Breast epithelium (tissue), 4 donors: ENCODE measurements at regions of chr2 and their contacts with region 1.

Region 1: DNA sequence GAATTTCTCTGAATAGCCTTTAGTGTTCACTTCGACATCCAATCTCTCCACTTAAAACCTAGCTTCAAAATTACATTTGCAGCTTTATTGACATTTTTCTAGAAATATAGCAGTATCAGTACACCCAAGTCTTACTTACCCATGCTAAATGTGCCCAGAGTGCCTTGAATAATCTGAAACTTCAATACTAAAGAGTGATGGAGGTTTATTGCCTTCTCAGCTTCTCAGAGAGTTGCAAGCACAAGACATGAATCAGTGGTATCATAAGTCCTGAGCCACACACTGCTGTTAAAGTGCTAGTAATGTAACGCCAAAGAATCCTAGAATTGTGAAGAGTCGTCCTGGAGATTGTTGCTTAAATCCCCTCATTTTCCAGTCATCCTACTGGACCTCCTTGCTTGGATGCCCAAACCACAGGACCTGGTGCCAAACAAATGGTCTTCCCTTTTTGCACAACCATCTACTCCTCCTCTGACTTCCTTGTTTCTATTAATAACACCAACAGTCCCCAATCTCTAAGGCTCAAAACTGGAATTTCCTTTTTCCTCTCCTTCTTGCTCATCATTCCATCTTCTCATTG is 83.2 kb upstream of the SPATS2L start:
- DNase-seq: no peak
- H3K4me3 ChIP-seq: no peak overlapping the region
- H3K27ac ChIP-seq: no peak overlapping the region
- H3K4me1 ChIP-seq: peaks cover 0 to 2% of the 10 kb centered on the region in 2 donors
- H3K27me3 ChIP-seq: no peaks in the 10 kb centered on the region
- CTCF ChIP-seq: no peak
- POLR2A ChIP-seq: no peak

Region 2: GRCh38 chr2:200300648-200301314 is 77.5 kb after region 1 on chr2:
- intact Hi-C with region 1: loop called (anchors 2 kb)
- DNase-seq: peak in 1 of 2 donors; percentile 47
- H3K4me3 ChIP-seq: no peak overlapping the region
- H3K27ac ChIP-seq: no peak overlapping the region
- H3K4me1 ChIP-seq: no peaks in the 10 kb centered on the region
- H3K27me3 ChIP-seq: no peaks in the 10 kb centered on the region
- CTCF ChIP-seq: no peak
- POLR2A ChIP-seq: no peak

Region 3: DNA sequence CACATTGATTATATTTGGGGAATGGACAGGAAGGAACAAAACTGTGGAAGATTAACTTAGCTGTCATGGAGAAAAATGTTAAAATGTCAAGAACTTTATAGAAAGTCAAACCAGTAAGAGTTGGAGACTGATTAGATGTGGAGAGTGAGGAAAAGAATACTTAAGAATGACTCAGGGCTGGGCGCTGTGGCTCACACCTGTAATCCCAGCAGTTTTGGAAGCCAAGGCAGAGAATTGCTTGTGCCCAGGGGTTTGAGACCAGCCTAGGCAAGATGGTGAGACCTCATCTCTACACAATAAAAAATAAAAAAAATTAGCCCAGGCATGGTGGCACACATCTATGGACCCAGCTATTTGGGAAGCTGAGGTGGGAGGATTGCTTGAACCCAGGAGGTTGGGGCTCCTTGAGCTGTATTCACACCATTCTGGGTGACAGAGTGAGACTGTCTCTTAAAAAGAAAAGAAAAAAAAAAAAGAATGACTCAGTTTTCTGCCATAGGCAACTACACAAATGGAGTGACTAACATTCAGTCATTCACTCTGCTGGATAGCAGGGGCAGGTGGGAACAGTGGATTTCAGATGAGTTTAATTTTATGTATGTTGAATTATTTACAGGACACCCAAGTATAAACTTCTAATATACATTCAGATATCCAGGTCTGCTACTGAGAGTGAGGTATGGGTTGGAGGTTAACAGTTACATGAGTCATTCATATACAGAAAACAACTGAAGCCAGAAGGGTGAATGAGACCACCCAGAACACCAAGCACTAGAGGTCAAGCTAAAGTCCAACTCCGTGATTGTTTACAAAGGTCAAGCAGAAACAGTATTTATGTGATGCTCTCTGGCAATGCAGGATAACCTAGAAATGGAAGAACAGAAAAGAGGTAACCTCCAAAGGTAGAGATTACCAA is 706.3 kb after region 1 on chr2:
- intact Hi-C with region 1: no loop called
- DNase-seq: no peak
- H3K4me3 ChIP-seq: no peak overlapping the region
- H3K27ac ChIP-seq: no peak overlapping the region
- H3K4me1 ChIP-seq: no peaks in the 10 kb centered on the region
- H3K27me3 ChIP-seq: no peaks in the 10 kb centered on the region
- CTCF ChIP-seq: no peak
- POLR2A ChIP-seq: no peak